ENCODE measurements at regions of chr2 and their contacts with region 1.

Region 1: DNA sequence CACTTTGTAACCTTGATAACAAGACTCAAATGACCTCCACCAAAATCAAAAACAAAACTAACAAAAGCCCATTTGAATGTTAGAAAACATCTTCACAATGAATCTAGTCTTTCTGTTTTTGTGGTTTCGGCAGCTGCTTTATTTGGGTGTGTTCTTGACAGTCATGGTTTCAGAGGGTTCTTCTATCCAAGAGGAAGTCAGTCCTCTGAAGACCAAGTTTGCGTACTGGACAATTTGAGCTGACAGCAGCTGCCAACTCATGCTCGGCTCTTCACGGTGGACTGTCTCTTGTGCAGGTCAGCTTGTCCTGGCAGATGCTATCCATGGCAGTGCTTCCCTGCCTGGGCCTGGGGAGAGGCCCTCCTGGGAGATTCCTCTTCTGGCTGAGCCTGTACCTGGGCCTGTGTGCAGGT is 91.0 kb downstream of the TMEM17 start:
- DNase-seq: peak; percentile 60

Region 2: GRCh38 chr2:61922714-61923113 is 492.3 kb before region 1 on chr2:
- intact Hi-C with region 1: loop called in 1 of 2 experiments (anchors 2 kb)
- DNase-seq: no peak

Region 3: GRCh38 chr2:62195421-62196277 is 219.4 kb before region 1 on chr2 and contains the start of gene B3GNT2:
- intact Hi-C with region 1: loop called in 1 of 2 experiments (anchors 10 kb)
- DNase-seq: peak; percentile 94
- total RNA-seq, gene B3GNT2: 12.5 to 16.2 TPM

Measured in posterior vena cava (tissue), 2 donors.